ENCODE measurements at regions of chr12 and their contacts with region 1.

Region 1: DNA sequence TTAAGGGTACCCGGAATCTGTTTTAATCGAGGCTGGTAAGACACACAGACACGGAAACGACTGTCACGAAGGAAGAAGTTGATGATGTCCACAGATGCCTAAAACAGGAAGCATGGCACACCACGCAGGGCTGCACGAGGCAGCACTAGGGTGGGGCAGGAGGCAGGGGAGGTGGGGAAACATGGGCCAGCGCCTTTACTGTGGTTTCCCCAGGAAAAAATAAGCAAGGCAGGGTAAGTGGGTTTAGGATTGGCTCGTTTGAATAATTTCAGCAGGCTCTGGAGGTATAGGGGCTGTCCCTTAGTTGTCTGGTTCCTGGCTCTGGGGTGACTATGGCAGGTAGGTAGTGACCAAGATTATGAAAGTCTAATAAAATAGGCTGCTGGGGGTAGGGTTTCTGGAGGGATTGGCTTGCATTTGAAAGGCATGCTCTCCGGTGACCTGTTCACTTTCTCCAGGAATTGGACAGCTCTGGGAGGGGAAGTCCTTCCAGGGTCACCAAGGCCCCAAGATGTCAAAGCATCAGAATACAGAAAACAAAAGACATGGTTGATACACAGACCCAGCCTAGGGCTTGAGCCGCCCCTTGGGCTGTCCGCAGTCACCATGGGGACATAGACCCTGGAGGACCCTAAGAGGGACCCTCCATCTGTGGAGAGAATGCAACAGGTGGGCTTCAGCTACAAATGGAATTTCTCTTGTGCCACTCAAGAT is 35.3 kb downstream of the MAP1LC3B2 start:
- DNase-seq: no peak
- H3K4me3 ChIP-seq: no peak overlapping the region
- H3K27ac ChIP-seq: no peak overlapping the region
- H3K4me1 ChIP-seq: peaks cover 30 to 55% (median 49%) of the 10 kb centered on the region in 4 donors
- H3K27me3 ChIP-seq: no peaks in the 10 kb centered on the region
- CTCF ChIP-seq: no peak
- EP300 ChIP-seq: no peak
- POLR2A ChIP-seq: no peak

Region 2: DNA sequence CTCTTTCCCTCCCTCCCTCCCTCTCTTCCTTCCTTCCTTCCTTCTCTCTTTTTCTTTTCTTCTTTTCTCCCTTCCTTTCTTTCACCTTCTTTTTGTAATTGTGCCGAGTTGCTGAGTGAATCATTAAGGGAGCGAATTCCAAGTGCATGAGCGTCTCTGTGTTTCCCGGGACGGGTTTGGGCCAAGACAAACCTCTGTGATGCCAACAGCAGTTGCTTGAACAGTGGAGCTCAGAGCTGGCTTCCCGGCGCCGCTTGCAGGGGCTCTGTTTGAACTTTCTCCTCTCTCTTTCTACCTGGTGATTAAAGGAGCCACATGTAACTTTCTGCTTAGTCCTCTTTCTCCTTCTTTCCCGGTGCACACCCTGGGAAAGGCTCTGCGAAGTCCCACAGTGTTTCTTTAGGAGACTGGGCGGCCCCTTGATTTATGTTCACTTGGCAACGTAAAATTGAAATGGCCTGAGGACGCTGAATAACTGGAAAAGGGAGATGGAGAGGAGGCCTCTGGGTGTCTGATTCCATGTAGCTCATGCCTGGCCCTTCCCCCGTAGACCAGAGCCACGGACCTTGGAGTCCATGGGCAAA is 69.0 kb before region 1 on chr12:
- intact Hi-C with region 1: loop called (anchors 2 kb)
- DNase-seq: no peak
- H3K4me3 ChIP-seq: peak overlapping the region; percentile 13 to 38 (median 30)
- H3K27ac ChIP-seq: peak overlapping the region; percentile 81 to 88 (median 84)
- H3K4me1 ChIP-seq: peaks cover 10 to 49% (median 48%) of the 10 kb centered on the region in 4 donors
- H3K27me3 ChIP-seq: no peaks in the 10 kb centered on the region
- CTCF ChIP-seq: no peak
- EP300 ChIP-seq: no peak
- POLR2A ChIP-seq: no peak

Measured in esophagus muscularis mucosa (tissue), 4 donors.